Activated CD4-positive, alpha-beta memory T cell treated with anti-CD3 and anti-CD28 coated beads for 36 hours (primary cell): ENCODE measurements at regions of chr6 and their contacts with region 1.

Region 1: GRCh38 chr6:31441365-31442267 is 38.2 kb downstream of the MICA start:
- DNase-seq: peak; percentile 88
- H3K4me3 Mint-ChIP-seq: no peak overlapping the region
- H3K27ac Mint-ChIP-seq: no peak overlapping the region
- H3K4me1 Mint-ChIP-seq: peaks cover 6% of the 10 kb centered on the region
- H3K27me3 Mint-ChIP-seq: peaks cover 32% of the 10 kb centered on the region

Region 2: DNA sequence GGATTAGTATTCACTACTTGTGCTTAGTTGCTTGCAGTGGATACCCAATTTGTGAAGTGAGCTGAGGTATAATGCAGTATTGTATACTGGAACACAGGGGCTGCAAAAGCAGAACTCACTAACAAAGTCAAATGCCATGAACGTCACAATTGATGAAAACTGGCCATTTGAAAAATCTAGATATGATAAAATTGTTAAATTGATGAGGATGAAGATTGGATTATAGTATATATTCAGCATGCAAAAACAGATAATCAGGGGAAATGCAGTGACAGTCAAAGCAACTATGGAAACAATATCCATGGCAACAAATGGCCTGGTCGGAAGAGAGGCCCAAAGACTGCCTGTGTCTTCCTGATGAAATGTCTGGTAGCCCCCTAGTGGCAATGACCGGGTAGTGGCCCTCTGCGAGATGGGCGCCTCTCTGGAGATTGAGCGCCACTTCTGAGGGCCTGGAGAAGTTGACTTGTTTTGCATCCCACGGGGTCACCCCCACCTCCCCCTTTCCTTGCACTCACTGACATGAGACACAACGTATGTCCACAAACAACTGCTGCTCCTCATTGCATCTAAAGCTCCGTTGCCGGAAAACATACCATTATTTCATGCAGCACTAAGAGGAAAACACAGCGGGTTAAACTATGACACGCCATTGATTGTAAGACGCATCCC is 372.8 kb before region 1 on chr6:
- CTCF ChIA-PET with region 1: no interaction called
- POLR2A ChIA-PET with region 1: no interaction called
- intact Hi-C with region 1: no loop called
- DNase-seq: peak; percentile 81
- H3K4me3 Mint-ChIP-seq: no peak overlapping the region
- H3K27ac Mint-ChIP-seq: no peak overlapping the region
- H3K4me1 Mint-ChIP-seq: no peaks in the 10 kb centered on the region
- H3K27me3 Mint-ChIP-seq: no peaks in the 10 kb centered on the region

Region 3: GRCh38 chr6:31396422-31397152 is 45.0 kb before region 1 on chr6:
- CTCF ChIA-PET with region 1: interaction called, 79 read pairs
- POLR2A ChIA-PET with region 1: interaction called, 3 read pairs
- intact Hi-C with region 1: loop called (anchors 1 kb)
- DNase-seq: peak; percentile 92
- H3K4me3 Mint-ChIP-seq: no peak overlapping the region
- H3K27ac Mint-ChIP-seq: no peak overlapping the region
- H3K4me1 Mint-ChIP-seq: peaks cover 18% of the 10 kb centered on the region
- H3K27me3 Mint-ChIP-seq: no peaks in the 10 kb centered on the region

Region 4: DNA sequence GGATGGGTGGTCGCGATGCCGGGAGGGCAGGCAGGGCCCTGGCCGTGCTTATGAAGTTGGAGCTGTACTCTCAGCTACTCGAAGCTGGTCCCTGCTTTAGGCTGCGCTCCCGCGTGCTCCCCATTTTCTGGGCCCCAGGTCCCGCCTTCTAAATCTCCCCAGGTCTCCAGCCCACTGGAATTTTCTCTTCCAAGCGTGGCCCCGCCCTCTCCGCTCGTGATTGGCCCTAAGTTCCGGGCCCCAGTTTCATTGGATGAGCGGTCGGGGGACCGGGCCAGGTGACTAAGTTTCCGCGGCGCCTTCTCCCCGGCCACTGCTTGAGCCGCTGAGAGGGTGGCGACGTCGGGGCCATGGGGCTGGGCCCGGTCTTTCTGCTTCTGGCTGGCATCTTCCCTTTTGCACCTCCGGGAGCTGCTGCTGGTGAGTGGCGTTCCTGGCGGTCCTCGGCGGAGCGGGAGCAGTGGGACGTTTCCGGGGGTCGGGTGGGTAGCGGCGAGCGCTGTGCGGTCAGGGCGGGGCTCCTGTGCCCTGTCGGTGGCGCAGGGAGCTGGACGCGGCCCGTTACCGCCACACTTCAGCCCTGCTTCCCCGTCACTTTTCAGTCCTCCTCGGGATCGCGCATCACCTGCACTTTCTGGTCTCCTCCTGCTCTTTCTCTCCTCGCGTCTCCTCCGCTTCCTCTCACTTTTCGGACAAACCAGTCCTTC is 38.2 kb before region 1 on chr6 and contains the start of gene MICA:
- CTCF ChIA-PET with region 1: interaction called, 79 read pairs
- POLR2A ChIA-PET with region 1: no interaction called
- intact Hi-C with region 1: no loop called
- DNase-seq: peak; percentile 84
- H3K4me3 Mint-ChIP-seq: peak within 1 kb of the TSS; percentile 79
- H3K27ac Mint-ChIP-seq: peak within 1 kb of the TSS; percentile 47
- H3K4me1 Mint-ChIP-seq: peaks cover 57% of the 10 kb centered on the region
- H3K27me3 Mint-ChIP-seq: no peaks in the 10 kb centered on the region
- total RNA-seq, gene MICA: 7.1 to 8.6 TPM

Region 5: DNA sequence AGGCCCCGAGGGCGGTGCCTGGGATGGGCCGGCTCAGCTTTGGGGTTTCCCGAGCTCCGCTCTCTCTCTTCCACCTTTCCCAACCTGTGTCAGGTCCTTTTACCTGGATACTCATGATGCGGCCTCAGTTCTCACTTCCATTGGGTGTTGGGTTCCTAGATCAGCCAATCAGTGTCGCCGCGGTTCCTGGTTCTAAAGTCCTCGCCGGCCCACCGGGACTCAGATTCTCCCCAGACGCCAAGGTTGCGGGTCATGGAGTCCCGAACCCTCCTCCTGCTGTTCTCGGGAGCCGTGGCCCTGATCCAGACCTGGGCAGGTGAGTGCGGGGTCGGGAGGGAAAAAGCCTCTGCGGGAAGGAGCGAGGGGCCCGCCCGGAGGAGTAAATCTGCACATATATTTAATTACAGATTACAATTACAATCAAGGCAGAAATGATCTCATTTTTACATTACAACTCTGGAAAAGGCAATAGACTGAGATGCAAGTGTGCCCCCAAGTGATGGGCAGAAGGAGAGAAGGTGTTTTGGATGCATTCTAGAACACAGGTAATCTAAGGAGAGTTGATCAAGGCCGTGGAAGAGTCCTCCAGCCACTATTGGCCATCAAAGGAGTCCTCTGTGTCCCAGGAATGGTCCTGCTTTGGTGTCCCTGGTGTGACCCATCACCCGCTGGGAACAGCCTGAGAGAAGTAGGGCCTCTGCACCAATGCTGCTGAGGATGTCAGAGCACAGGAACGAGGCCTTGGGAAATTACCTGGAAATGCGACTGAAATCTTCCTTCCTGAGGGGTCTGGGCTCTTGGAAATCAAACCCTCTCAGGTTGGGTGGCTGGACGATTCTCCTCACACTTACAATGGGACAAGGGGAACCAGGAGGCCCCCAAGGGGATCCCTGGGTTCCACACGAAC is 21.6 kb after region 1 on chr6:
- CTCF ChIA-PET with region 1: interaction called, 5 read pairs
- POLR2A ChIA-PET with region 1: no interaction called
- intact Hi-C with region 1: loop called (anchors 1 kb)
- DNase-seq: peak; percentile 94
- H3K4me3 Mint-ChIP-seq: peak overlapping the region; percentile 100
- H3K27ac Mint-ChIP-seq: peak overlapping the region; percentile 96
- H3K4me1 Mint-ChIP-seq: peaks cover 58% of the 10 kb centered on the region
- H3K27me3 Mint-ChIP-seq: no peaks in the 10 kb centered on the region

Region 6: GRCh38 chr6:31525932-31526591 is 84.4 kb after region 1 on chr6:
- CTCF ChIA-PET with region 1: no interaction called
- POLR2A ChIA-PET with region 1: no interaction called
- intact Hi-C with region 1: no loop called
- DNase-seq: no peak
- H3K4me3 Mint-ChIP-seq: no peak overlapping the region
- H3K27ac Mint-ChIP-seq: no peak overlapping the region
- H3K4me1 Mint-ChIP-seq: peaks cover 3% of the 10 kb centered on the region
- H3K27me3 Mint-ChIP-seq: no peaks in the 10 kb centered on the region